Activated CD8-positive, alpha-beta T cell treated with anti-CD3 and anti-CD28 coated beads for 36 hours (primary cell): ENCODE measurements at regions of chr7 and their contacts with region 1.

Region 1: DNA sequence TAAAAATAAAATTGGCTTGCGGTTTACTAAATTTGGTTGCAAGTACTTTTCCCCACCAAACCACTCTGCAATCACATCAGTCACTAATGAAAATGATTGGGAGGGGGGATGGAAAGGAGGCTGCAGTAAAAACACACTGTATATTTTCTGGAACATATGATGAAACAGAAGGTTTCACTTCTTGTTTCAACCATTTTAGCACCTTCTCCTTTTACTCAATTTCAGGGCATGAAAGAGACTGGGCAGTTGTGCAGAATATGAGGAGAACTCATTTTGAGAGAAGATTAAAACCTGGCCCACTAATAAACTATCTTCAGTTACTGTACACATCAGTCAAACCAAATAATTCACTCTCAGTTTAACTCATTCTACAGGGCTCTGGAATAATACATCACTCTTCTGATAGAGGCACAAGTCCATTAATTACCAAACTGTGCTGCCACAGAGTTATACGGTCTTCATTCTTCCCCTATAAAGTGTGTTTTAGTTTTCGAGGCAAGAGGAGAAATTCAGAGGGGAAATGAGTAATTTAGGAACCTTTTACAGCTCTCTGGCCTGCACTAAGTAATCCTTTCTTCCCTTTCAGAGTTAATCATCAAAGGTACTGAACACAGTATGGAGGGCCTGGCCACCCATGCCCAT is 25.5 kb downstream of the JAZF1 start:
- DNase-seq: peak; percentile 28
- ATAC-seq: peak; percentile 63
- H3K4me3 Mint-ChIP-seq: peak overlapping the region; percentile 11
- H3K27ac Mint-ChIP-seq: peak overlapping the region; percentile 82
- H3K4me1 Mint-ChIP-seq: peaks cover 58% of the 10 kb centered on the region
- H3K27me3 Mint-ChIP-seq: no peaks in the 10 kb centered on the region
- CTCF ChIP-seq: no peak

Region 2: GRCh38 chr7:28207486-28208158 is 52.5 kb after region 1 on chr7:
- CTCF ChIA-PET with region 1: interaction called, 4 read pairs
- POLR2A ChIA-PET with region 1: interaction called, 3 read pairs
- intact Hi-C with region 1: loop called (anchors 2 kb)
- DNase-seq: peak; percentile 45
- ATAC-seq: peak; percentile 84
- H3K4me3 Mint-ChIP-seq: peak overlapping the region; percentile 5
- H3K27ac Mint-ChIP-seq: peak overlapping the region; percentile 82
- H3K4me1 Mint-ChIP-seq: peaks cover 54% of the 10 kb centered on the region
- H3K27me3 Mint-ChIP-seq: peaks cover 2% of the 10 kb centered on the region
- CTCF ChIP-seq: no peak

Region 3: DNA sequence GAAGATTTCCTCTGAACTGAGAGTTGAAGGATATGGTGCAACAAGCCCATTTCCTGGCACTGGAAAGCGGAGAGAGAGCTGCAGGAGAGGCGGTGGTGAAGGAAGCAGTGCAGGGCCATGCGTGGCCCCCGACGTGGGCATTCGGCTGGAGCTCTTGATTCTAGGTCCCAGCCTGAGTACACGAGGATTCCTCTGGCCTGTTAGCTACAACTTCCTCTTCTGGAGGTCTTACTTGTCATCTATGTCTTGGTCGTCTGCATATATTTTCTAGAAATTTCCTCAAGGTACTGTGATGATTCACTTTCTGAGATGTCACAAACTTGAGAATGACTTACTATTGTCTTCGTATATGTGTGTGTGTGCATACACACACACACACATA is 84.7 kb after region 1 on chr7:
- CTCF ChIA-PET with region 1: no interaction called
- POLR2A ChIA-PET with region 1: interaction called, 3 read pairs
- intact Hi-C with region 1: loop called (anchors 2 kb)
- DNase-seq: peak; percentile 10
- ATAC-seq: peak; percentile 73
- H3K4me3 Mint-ChIP-seq: peak overlapping the region; percentile 22
- H3K27ac Mint-ChIP-seq: peak overlapping the region; percentile 56
- H3K4me1 Mint-ChIP-seq: peaks cover 13% of the 10 kb centered on the region
- H3K27me3 Mint-ChIP-seq: peaks cover 31% of the 10 kb centered on the region
- CTCF ChIP-seq: no peak